ENCODE measurements at regions of chr7 and their contacts with region 1.

Region 1: GRCh38 chr7:99558306-99559174 is at the start of gene ZNF655:
- DNase-seq: peak; percentile 96
- ATAC-seq: peak; percentile 85
- H3K4me3 Mint-ChIP-seq: peak within 1 kb of the TSS; percentile 99
- H3K27ac Mint-ChIP-seq: peak within 1 kb of the TSS; percentile 100
- H3K4me1 Mint-ChIP-seq: peaks cover 52% of the 10 kb centered on the region
- H3K27me3 Mint-ChIP-seq: no peaks in the 10 kb centered on the region
- CTCF ChIP-seq: no peak
- total RNA-seq, gene ZNF655: 63.0 to 65.2 TPM

Region 2: GRCh38 chr7:99616359-99617191 is 58.0 kb after region 1 on chr7 and contains the start of gene ZSCAN25:
- CTCF ChIA-PET with region 1: interaction called, 4 read pairs
- POLR2A ChIA-PET with region 1: interaction called, 10 read pairs
- intact Hi-C with region 1: no loop called
- DNase-seq: peak; percentile 93
- ATAC-seq: peak; percentile 93
- H3K4me3 Mint-ChIP-seq: peak within 1 kb of the TSS; percentile 94
- H3K27ac Mint-ChIP-seq: peak within 1 kb of the TSS; percentile 98
- H3K4me1 Mint-ChIP-seq: peaks cover 48% of the 10 kb centered on the region
- H3K27me3 Mint-ChIP-seq: no peaks in the 10 kb centered on the region
- CTCF ChIP-seq: no peak
- total RNA-seq, gene ZSCAN25: 31.8 to 35.8 TPM

Region 3: GRCh38 chr7:99624484-99624883 is 65.9 kb after region 1 on chr7:
- CTCF ChIA-PET with region 1: no interaction called
- POLR2A ChIA-PET with region 1: interaction called, 19 read pairs
- intact Hi-C with region 1: no loop called
- DNase-seq: peak; percentile 96
- ATAC-seq: peak; percentile 76
- H3K4me3 Mint-ChIP-seq: peak overlapping the region; percentile 99
- H3K27ac Mint-ChIP-seq: peak overlapping the region; percentile 100
- H3K4me1 Mint-ChIP-seq: peaks cover 81% of the 10 kb centered on the region
- H3K27me3 Mint-ChIP-seq: no peaks in the 10 kb centered on the region
- CTCF ChIP-seq: no peak